Aorta (tissue), 5 donors: ENCODE measurements at regions of chr10 and their contacts with region 1.

Region 1: GRCh38 chr10:24724381-24725228 is 918 bp upstream of the ARHGAP21 start:
- DNase-seq: peak; percentile 99
- ATAC-seq: peak; percentile 95
- H3K4me3 ChIP-seq: peak overlapping the region; percentile 59 to 96
- H3K27ac ChIP-seq: peak overlapping the region in 1 of 2 donors; percentile 93
- H3K4me1 ChIP-seq: no peaks in the 10 kb centered on the region
- H3K27me3 ChIP-seq: no peaks in the 10 kb centered on the region

Region 2: DNA sequence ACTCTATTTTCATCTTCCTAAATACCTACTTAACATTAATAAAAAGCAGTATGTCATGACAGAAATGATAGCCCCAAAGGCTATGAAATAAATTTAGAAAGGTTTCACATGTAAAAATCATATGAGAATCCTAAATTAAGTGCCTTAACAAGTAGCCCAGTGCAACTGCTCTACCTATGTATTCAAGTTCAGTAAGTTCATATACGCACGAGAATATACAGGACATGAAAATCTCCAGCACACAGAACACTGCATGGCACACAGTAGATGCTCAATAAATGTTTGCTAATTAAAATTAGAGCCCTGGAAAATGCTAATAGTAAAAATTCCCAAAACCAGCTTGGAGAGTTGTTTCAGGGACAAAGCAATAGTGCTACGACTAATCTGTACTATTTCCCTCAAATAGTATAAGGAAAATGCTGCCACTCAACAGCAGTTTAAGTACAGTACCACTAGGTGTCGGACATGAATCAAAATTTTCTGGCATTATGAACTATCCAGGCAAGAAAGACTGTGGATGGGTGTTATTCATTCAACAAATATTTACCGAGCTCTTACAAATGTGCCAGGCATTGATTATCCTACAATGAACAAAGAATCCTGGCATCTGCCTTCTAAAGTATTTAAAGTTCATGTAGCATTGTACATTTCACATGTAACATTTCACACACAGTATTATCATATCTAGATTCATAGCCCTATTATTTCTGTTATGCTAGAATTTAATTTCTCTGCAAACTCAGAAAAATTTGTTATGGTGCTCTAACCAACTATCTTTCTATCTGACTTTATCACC is 81.8 kb before region 1 on chr10:
- intact Hi-C with region 1: loop called (anchors 5 kb)
- DNase-seq: no peak
- ATAC-seq: peak; percentile 91
- H3K4me3 ChIP-seq: no peak overlapping the region
- H3K27ac ChIP-seq: no peak overlapping the region
- H3K4me1 ChIP-seq: peaks cover 1 to 6% of the 10 kb centered on the region in 2 donors
- H3K27me3 ChIP-seq: no peaks in the 10 kb centered on the region

Region 3: GRCh38 chr10:24866604-24867583 is 142.3 kb after region 1 on chr10:
- intact Hi-C with region 1: loop called in 1 of 2 experiments (anchors 5 kb)
- DNase-seq: peak; percentile 77 to 82
- ATAC-seq: peak; percentile 78
- H3K4me3 ChIP-seq: peak overlapping the region; percentile 15 to 16
- H3K27ac ChIP-seq: no peak overlapping the region
- H3K4me1 ChIP-seq: peaks cover 0 to 2% of the 10 kb centered on the region in 2 donors
- H3K27me3 ChIP-seq: no peaks in the 10 kb centered on the region

Region 4: DNA sequence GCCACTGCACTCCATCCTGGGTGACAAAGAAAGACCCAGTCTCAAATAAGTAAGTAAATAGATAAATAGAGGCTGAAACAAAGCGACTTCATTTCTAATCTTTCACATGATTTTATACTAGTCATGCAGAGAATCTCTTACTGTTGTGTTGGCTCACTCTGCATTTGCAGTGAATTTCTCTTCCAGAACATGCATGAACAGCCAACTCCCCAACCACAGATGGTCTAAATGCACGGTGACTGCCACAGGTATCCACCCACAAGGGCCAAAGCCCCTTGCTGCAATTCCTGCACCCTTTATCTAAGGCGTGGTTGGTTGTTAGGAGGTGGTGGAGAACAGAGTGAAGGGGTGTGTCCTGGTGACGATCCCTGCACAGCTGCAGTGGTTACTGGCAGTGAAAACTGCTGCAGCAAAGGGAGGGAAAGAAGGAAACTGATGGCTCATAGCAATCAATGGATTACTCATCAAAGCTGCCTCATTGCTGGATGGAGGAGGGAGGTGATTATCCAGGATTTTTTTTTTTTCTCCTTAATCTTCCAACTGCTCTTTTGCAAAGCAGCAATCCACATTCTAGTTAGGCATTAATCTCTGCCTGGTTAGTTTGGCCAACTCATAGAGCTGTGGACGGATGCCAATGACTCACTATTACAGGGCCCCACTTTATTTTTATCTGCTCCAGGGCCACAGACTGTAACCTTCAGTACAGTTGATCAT is 177.2 kb after region 1 on chr10:
- intact Hi-C with region 1: no loop called
- DNase-seq: peak in 1 of 2 donors; percentile 71
- ATAC-seq: peak; percentile 81
- H3K4me3 ChIP-seq: no peak overlapping the region
- H3K27ac ChIP-seq: no peak overlapping the region
- H3K4me1 ChIP-seq: peaks cover 2 to 4% of the 10 kb centered on the region in 2 donors
- H3K27me3 ChIP-seq: no peaks in the 10 kb centered on the region

Region 5: DNA sequence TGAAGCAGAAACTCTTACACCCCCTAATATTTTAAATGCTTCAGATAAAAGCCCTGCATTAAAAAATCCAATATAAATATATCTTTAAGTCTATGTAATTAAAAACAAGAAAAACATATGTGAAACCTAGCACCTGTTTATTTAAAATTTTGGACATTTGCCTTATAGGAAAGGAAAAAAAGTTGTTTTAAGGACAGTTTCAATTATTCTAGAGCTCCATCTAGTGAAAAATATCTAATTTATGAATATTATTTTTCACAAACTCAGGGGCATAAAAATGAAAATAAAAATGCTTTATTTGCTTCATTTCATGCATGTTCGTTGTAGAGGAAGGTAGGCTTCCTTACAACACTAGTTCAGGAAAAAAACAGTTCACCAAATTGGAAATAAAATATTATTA is 265.3 kb after region 1 on chr10:
- intact Hi-C with region 1: loop called in 1 of 2 experiments (anchors 10 kb)
- DNase-seq: no peak
- ATAC-seq: no peak
- H3K4me3 ChIP-seq: no peak overlapping the region
- H3K27ac ChIP-seq: no peak overlapping the region
- H3K4me1 ChIP-seq: no peaks in the 10 kb centered on the region
- H3K27me3 ChIP-seq: no peaks in the 10 kb centered on the region

Region 6: GRCh38 chr10:25059764-25060389 is 335.3 kb after region 1 on chr10:
- intact Hi-C with region 1: loop called in 1 of 2 experiments (anchors 10 kb)
- DNase-seq: peak; percentile 86 to 88
- ATAC-seq: peak; percentile 86
- H3K4me3 ChIP-seq: no peak overlapping the region
- H3K27ac ChIP-seq: no peak overlapping the region
- H3K4me1 ChIP-seq: peaks cover 2 to 3% of the 10 kb centered on the region in 2 donors
- H3K27me3 ChIP-seq: no peaks in the 10 kb centered on the region